ENCODE measurements at regions of chr2 and their contacts with region 1.

Region 1: GRCh38 chr2:177348733-177349693 is 43.6 kb upstream of the AGPS start:
- DNase-seq: no peak
- ATAC-seq: no peak
- H3K4me3 ChIP-seq: no peak overlapping the region
- H3K27ac ChIP-seq: no peak overlapping the region
- H3K4me1 ChIP-seq: peaks cover 0 to 7% (median 5%) of the 10 kb centered on the region in 3 donors
- H3K27me3 ChIP-seq: no peaks in the 10 kb centered on the region
- CTCF ChIP-seq: no peak

Region 2: DNA sequence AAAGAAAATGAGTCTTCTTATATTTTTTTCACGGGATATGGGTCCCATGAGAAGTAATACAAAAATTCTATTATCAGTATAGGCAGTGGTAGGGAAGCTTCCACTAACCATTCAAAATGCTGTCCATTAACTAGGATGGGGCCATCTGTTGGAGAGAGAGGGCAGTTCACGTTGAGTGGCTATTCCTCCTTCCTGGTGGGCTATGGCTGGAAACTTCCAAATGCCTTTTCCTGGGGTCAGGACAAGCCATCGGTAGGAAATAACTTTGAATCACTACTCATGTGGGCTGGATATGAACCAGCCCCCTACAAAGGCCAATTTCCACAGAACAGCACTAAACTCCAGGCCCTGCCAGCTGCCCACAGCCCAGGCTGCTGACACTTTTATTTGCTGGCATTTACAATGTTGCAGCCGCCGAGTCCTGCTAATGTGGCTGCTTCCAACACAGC is 292.5 kb before region 1 on chr2:
- intact Hi-C with region 1: no loop called
- DNase-seq: no peak
- ATAC-seq: no peak
- H3K4me3 ChIP-seq: no peak overlapping the region
- H3K27ac ChIP-seq: no peak overlapping the region
- H3K4me1 ChIP-seq: no peaks in the 10 kb centered on the region
- H3K27me3 ChIP-seq: no peaks in the 10 kb centered on the region
- CTCF ChIP-seq: no peak

Region 3: GRCh38 chr2:177717831-177718618 is 369.0 kb after region 1 on chr2:
- intact Hi-C with region 1: loop called in 1 of 3 experiments (anchors 10 kb)
- DNase-seq: no peak
- ATAC-seq: peak in 1 of 4 donors; percentile 29
- H3K4me3 ChIP-seq: no peak overlapping the region
- H3K27ac ChIP-seq: no peak overlapping the region
- H3K4me1 ChIP-seq: no peaks in the 10 kb centered on the region
- H3K27me3 ChIP-seq: peaks cover 0 to 2% (median 0%) of the 10 kb centered on the region in 4 donors
- CTCF ChIP-seq: no peak